ENCODE measurements at regions of chrX and their contacts with region 1.

Region 1: GRCh38 chrX:57821703-57822375 is 88.4 kb downstream of the ZXDA start:
- H3K4me3 ChIP-seq: no peak overlapping the region
- H3K27ac ChIP-seq: no peak overlapping the region
- H3K4me1 ChIP-seq: no peaks in the 10 kb centered on the region
- CTCF ChIP-seq: peak; percentile 48; the same call in 1 of the 2 replicates

Region 2: GRCh38 chrX:57651169-57651919 is 170.5 kb before region 1 on chrX:
- CTCF ChIA-PET with region 1: no interaction called
- POLR2A ChIA-PET with region 1: no interaction called
- H3K4me3 ChIP-seq: no peak overlapping the region
- H3K27ac ChIP-seq: no peak overlapping the region
- H3K4me1 ChIP-seq: no peaks in the 10 kb centered on the region
- CTCF ChIP-seq: no peak

Region 3: DNA sequence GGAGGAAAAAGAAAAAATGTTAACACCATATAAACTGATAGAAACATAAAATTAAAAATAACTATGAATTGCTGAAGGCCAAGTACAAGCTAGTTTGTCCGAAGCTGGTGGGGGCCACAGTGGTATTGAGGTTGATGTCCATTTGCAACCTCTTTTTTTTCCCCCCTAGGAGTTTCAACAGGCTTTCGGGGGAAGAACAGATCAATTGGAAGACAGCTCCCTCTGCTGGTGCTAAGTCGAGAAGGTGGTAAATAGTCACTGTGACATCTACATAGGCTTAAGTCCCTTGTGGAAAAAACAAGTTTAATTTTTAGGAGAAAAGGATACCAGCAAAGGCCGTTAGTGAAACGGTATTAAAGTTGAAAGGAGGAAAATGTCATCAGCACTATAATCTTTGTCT is 204.1 kb after region 1 on chrX:
- CTCF ChIA-PET with region 1: interaction called, 12 read pairs
- POLR2A ChIA-PET with region 1: no interaction called
- H3K4me3 ChIP-seq: no peak overlapping the region
- H3K27ac ChIP-seq: no peak overlapping the region
- H3K4me1 ChIP-seq: no peaks in the 10 kb centered on the region
- CTCF ChIP-seq: no peak

Measured in HEK293 (cell line).